Activated T-helper 1 cell treated with anti-CD3 and anti-CD28 coated beads, Interleukin-12 subunit alpha, Interleukin-12 subunit beta, Interleukin-2, Interleukin-4 antibody, amounts not matched to agents 30 ng/mL and 10 ng/mL and 1 ng/mL, durations not matched to agents 14 hours and 24 hours and 36 hours (primary cell): ENCODE measurements at regions of chr17 and their contacts with region 1.

Region 1: GRCh38 chr17:60142872-60143499 is 6.8 kb upstream of the CA4 start:
- DNase-seq: peak; percentile 70
- H3K4me3 Mint-ChIP-seq: peak overlapping the region; percentile 19
- H3K27ac Mint-ChIP-seq: no peak overlapping the region
- H3K4me1 Mint-ChIP-seq: peaks cover 30% of the 10 kb centered on the region
- H3K27me3 Mint-ChIP-seq: peaks cover 90% of the 10 kb centered on the region

Region 2: GRCh38 chr17:60102632-60103096 is 40.3 kb before region 1 on chr17:
- intact Hi-C with region 1: no loop called
- DNase-seq: peak; percentile 9
- H3K4me3 Mint-ChIP-seq: peak overlapping the region; percentile 53
- H3K27ac Mint-ChIP-seq: no peak overlapping the region
- H3K4me1 Mint-ChIP-seq: peaks cover 10% of the 10 kb centered on the region
- H3K27me3 Mint-ChIP-seq: peaks cover 31% of the 10 kb centered on the region

Region 3: DNA sequence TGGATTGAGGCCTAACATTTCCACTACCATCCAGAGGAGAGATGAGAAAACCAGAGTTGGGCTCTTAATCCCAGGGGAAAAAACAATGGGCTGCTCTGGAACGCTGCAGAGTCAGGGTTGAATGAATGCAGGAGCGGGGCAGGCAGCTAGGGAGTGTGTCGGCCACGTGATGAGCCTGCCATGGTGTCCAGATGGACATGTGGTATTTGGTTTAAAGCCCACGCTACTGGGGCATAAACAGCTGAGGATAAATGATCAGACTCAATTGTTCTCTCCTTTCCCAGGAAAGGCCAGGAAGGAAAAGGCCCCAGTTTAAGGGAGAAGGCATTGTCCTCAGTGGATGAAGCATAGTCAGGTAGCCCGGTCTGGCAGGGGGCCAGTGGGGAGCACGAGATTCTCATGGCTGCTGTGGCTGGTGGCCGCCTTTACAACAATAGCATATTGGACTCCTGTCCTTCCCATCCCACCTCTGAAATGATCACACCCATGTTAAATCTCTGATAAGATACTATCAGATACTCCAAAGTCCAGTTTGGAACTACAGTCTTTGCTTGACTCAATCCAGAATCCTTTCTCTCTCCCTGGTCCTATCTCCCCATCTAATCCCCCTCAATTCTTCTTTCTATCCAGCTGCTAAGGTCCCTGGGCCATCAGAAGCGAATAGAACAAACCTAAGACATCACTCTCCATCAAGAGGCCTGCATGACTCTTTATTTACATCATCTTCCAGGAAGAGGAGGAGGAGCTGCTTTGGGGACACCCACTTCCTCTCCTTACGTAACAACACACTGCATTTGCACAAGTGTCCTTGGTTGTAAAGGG is 27.1 kb after region 1 on chr17:
- intact Hi-C with region 1: loop called (anchors 2 kb)
- DNase-seq: peak; percentile 41
- H3K4me3 Mint-ChIP-seq: peak overlapping the region; percentile 58
- H3K27ac Mint-ChIP-seq: peak overlapping the region; percentile 90
- H3K4me1 Mint-ChIP-seq: peaks cover 32% of the 10 kb centered on the region
- H3K27me3 Mint-ChIP-seq: peaks cover 2% of the 10 kb centered on the region

Region 4: DNA sequence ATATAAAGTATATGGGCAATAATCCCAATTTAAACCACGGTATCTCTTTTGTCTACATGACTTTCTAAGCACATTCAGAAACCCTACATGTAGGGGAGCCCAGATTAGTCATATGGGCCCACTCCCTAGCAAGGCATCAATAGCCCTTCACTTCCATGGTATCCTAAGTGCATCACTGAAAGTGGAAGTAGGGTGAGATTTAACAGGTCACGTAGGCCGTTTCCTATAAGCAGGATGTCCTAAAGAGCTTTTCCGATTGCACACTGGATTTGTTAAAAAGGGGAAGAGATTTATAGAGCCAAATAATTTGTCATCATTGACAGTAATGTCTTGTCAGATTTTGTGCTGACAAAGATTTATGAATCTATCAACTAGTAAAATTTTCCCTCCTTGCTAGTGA is 45.8 kb after region 1 on chr17:
- intact Hi-C with region 1: no loop called
- DNase-seq: no peak
- H3K4me3 Mint-ChIP-seq: no peak overlapping the region
- H3K27ac Mint-ChIP-seq: no peak overlapping the region
- H3K4me1 Mint-ChIP-seq: no peaks in the 10 kb centered on the region
- H3K27me3 Mint-ChIP-seq: no peaks in the 10 kb centered on the region

Region 5: DNA sequence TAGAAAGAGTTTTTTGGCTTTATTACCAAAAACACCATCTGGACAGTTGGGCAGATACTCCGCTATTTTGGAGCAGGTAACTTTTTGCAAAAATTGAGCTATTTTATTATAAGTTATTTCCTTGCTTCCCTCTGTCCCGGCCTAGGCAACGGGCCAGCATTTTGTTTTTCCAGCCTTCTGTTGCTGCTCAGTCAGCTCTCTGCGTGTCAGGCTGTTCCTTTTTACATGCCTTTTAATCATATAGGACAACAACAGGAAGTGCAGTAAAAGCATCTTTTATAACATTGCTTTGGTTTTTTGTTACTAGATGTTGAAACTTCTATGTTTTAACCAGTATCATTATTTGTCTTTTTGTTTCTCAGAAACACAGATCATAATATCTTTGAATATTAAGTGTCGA is 487.4 kb after region 1 on chr17:
- intact Hi-C with region 1: loop called (anchors 10 kb)
- DNase-seq: no peak
- H3K4me3 Mint-ChIP-seq: no peak overlapping the region
- H3K27ac Mint-ChIP-seq: no peak overlapping the region
- H3K4me1 Mint-ChIP-seq: no peaks in the 10 kb centered on the region
- H3K27me3 Mint-ChIP-seq: no peaks in the 10 kb centered on the region